ENCODE measurements at regions of chr9 and their contacts with region 1.

Region 1: DNA sequence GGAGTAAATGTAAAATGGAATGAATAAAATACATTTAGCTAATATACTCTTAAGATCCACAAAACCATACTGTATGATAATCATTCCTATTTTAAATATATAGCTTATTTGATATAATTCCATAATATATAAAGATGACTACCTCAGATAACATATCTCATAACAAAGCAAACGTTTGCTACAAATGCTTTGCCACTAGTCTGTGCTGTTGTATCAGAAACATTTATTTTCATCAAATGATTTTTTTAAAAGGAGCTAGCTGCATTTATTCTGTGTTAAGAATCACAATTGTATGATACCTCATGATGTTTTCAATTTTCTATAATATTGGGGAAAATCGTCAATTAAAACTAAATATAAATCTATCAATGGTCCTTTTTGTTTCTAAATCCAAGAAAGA is 567.2 kb downstream of the PTPRD start:
- DNase-seq: peak; percentile 58
- H3K4me3 ChIP-seq: no peak overlapping the region
- H3K27ac ChIP-seq: no peak overlapping the region
- H3K4me1 ChIP-seq: no peaks in the 10 kb centered on the region
- H3K27me3 ChIP-seq: no peaks in the 10 kb centered on the region
- CTCF ChIP-seq: peak; percentile 11 to 42
- POLR2A ChIP-seq: no peak

Region 2: GRCh38 chr9:9998491-9999287 is 46.9 kb before region 1 on chr9:
- CTCF ChIA-PET with region 1: interaction called, 19 read pairs
- POLR2A ChIA-PET with region 1: no interaction called
- dilution Hi-C with region 1: no loop called
- intact Hi-C with region 1: no loop called
- DNase-seq: peak; percentile 86
- H3K4me3 ChIP-seq: peak overlapping the region in 1 of 3 experiments; percentile 30
- H3K27ac ChIP-seq: peak overlapping the region; percentile 68
- H3K4me1 ChIP-seq: peaks cover 36% of the 10 kb centered on the region
- H3K27me3 ChIP-seq: no peaks in the 10 kb centered on the region
- CTCF ChIP-seq: peak; percentile 55 to 56
- POLR2A ChIP-seq: peak; percentile 43

Region 3: DNA sequence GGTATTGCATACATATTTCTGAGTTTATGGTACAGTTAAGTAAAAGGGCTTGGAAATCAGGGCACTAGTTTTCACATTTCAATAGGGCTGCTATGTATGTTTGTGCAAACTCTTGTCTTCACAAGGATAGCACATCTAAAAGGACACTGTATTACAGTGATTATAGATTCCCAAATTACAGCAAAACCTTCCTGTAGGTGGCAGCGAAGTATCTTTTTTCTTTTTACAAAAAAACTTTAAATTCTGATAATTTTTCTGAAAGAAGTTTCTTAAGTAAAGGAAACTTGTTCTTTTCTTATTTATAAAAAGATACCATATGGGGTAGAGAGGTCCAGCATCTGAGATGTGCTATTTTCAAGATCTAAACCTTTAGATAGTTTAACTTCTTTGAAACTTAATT is 229.4 kb after region 1 on chr9:
- CTCF ChIA-PET with region 1: interaction called, 46 read pairs
- POLR2A ChIA-PET with region 1: no interaction called
- dilution Hi-C with region 1: no loop called
- intact Hi-C with region 1: no loop called
- DNase-seq: peak; percentile 35
- H3K4me3 ChIP-seq: no peak overlapping the region
- H3K27ac ChIP-seq: no peak overlapping the region
- H3K4me1 ChIP-seq: no peaks in the 10 kb centered on the region
- H3K27me3 ChIP-seq: no peaks in the 10 kb centered on the region
- CTCF ChIP-seq: peak; percentile 7 to 19
- POLR2A ChIP-seq: no peak